ENCODE measurements at regions of chr1 and their contacts with region 1.

Region 1: GRCh38 chr1:94854458-94855306 is 34.5 kb downstream of the SLC44A3 start:
- DNase-seq: peak; percentile 54
- ATAC-seq: peak; percentile 98
- H3K4me3 Mint-ChIP-seq: no peak overlapping the region
- H3K27ac Mint-ChIP-seq: no peak overlapping the region
- H3K4me1 Mint-ChIP-seq: no peaks in the 10 kb centered on the region
- H3K27me3 Mint-ChIP-seq: peaks cover 8% of the 10 kb centered on the region
- CTCF ChIP-seq: no peak

Region 2: DNA sequence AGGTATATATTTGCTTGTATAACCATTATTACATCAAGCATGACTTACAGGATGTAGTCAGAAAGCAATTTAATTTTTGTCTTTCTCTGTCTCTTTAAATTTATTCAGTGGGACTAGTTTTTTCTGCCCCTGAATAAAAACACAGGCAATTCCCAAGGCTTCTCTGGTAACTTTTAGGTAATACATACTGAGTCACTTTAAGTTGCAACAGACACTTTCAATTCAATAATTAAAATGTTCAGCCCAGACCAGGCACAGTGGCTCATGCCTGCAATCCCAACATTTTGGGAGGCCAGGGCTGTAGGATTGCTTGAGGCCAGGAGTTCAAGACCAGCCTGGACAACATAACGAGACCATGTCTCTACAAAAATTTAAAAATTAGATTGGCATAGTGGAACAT is 22.2 kb before region 1 on chr1:
- CTCF ChIA-PET with region 1: no interaction called
- POLR2A ChIA-PET with region 1: no interaction called
- intact Hi-C with region 1: loop called (anchors 2 kb)
- DNase-seq: no peak
- ATAC-seq: no peak
- H3K4me3 Mint-ChIP-seq: no peak overlapping the region
- H3K27ac Mint-ChIP-seq: no peak overlapping the region
- H3K4me1 Mint-ChIP-seq: peaks cover 5% of the 10 kb centered on the region
- H3K27me3 Mint-ChIP-seq: peaks cover 18% of the 10 kb centered on the region
- CTCF ChIP-seq: no peak

Region 3: DNA sequence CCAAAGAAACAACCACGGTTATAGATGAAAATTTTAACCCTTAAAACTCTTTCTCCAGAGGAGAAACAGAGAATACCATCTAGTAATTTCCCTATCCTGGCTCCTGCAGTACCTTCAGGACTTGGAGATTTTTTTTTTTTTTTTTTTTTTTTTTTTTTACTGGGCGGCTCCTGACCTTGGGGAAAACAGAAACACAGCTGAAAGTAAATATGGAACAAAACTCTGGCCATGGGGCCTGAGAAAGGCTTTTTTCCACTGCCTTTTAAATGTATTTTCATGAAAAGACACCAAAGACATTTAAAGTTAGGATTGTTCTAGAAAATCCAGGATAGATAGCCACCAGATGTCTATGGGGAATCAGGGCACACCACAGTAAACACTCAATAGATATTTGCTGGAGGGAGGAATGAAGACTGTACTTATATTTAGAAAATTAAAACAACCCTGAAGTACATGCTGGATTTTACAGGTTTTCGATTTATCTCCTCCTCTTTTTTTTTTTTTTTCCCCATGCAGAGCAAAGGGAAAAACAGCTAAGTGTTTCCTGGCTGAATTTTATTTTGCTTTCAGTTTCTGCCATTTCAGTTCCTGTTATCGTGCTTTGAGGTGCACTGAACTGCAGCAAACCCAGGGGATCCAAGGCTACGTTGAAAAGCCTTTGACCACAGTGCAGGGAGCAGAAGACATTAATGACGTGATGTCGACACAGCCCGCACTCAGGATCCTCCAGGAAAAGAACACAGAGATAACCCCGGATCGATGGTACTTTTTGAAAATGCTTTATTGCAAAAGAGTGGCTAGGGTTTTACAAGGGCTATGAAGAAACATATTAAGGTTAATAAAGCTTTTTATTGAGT is 108.0 kb after region 1 on chr1:
- CTCF ChIA-PET with region 1: interaction called, 3 read pairs
- POLR2A ChIA-PET with region 1: interaction called, 5 read pairs
- intact Hi-C with region 1: loop called (anchors 5 kb)
- DNase-seq: peak; percentile 17
- ATAC-seq: peak; percentile 96
- H3K4me3 Mint-ChIP-seq: peak overlapping the region; percentile 84
- H3K27ac Mint-ChIP-seq: peak overlapping the region; percentile 94
- H3K4me1 Mint-ChIP-seq: peaks cover 29% of the 10 kb centered on the region
- H3K27me3 Mint-ChIP-seq: no peaks in the 10 kb centered on the region
- CTCF ChIP-seq: no peak

Region 4: GRCh38 chr1:96060622-96061021 is 1205.9 kb after region 1 on chr1:
- CTCF ChIA-PET with region 1: no interaction called
- POLR2A ChIA-PET with region 1: no interaction called
- intact Hi-C with region 1: no loop called
- DNase-seq: no peak
- ATAC-seq: no peak
- H3K4me3 Mint-ChIP-seq: no peak overlapping the region
- H3K27ac Mint-ChIP-seq: no peak overlapping the region
- H3K4me1 Mint-ChIP-seq: no peaks in the 10 kb centered on the region
- H3K27me3 Mint-ChIP-seq: no peaks in the 10 kb centered on the region
- CTCF ChIP-seq: no peak

Measured in activated B cell treated with CpG ODN at 0.5 μM for 24 hours (primary cell).